Tibial artery (tissue), 4 donors: ENCODE measurements at regions of chr13 and their contacts with region 1.

Region 1: DNA sequence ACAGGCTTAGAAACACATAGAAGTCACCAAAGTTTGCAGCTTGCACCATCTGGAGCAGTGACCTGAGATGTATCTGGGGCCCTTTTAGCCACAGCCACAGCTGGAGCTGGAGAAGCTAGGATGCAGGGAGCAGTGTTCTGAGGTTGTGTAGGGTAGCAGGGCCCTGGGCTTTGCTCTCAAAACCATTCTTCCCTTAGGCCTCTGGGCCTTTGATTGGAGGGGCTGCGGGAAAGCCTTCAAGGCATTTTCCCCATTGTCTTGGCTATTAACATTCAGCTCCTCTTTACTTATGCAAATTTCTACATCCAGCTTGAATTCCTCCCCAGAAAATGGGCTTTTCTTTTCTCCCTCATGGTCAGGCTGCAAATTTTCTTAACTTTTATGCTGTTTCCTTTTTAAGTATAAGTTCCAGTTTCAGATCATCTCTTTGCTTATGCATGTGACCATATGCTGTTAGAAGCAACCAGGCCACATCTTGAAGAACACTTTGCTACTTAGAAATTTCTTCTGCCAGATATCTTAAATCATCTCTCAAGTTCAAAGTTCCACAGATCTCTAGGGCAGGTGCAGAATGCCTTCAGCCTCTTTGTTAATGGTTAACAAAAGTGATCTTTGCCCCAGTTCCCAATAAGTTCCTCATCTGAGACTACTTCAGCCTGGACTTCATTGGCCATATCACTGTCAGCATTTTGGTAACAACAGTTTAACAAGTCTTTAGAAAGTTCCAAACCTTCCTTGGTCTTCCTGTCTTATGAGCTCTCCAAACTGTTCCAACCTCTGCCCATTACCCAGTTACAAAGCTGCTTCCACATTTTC is 48.5 kb downstream of the NBEA start:
- DNase-seq: no peak
- H3K4me3 ChIP-seq: no peak overlapping the region
- H3K27ac ChIP-seq: no peak overlapping the region
- H3K4me1 ChIP-seq: no peaks in the 10 kb centered on the region
- H3K27me3 ChIP-seq: no peaks in the 10 kb centered on the region
- CTCF ChIP-seq: no peak

Region 2: DNA sequence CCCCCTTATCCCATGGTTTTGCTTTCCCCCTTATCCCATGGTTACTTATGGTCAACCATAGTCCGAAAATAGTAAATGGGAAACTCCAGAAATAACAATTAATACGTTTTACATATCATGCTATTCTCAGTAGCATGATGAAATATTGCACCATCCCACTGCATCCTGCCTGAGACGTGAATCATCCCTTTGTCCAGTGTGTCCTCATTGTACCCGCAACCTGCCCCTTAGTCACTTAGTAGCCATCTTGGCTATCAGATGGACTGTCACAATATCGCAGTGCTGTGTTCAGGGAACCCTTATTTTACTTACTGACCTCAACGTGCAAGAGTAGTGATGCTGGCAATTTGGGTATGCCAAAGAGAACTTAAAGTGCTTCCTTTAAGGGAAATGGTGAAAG is 59.0 kb before region 1 on chr13:
- intact Hi-C with region 1: loop called (anchors 2 kb)
- DNase-seq: no peak
- H3K4me3 ChIP-seq: no peak overlapping the region
- H3K27ac ChIP-seq: no peak overlapping the region
- H3K4me1 ChIP-seq: no peaks in the 10 kb centered on the region
- H3K27me3 ChIP-seq: no peaks in the 10 kb centered on the region
- CTCF ChIP-seq: no peak